Esophagus squamous epithelium (tissue), 5 donors: ENCODE measurements at regions of chr1 and their contacts with region 1.

Region 1: DNA sequence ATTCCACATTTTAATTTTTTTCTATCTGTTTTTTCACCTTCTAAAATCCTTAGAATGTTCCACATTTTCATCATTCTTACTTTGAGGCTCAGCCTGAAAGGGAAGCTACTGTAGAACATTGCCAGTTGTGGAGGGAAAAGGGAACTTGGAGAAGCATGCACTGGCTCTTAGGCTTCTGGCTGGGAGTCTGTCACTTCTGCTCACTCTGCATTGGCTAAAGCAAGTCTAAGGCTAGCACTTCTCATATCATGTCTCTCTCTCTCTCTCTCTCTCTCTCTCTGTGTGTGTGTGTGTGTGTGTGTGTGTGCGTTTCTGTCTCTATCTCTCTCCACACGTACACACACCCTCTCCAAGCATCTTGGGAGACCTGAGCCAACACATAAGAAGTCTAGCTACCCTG is 49.6 kb upstream of the ADAR start:
- DNase-seq: no peak
- H3K4me3 ChIP-seq: no peak overlapping the region
- H3K27ac ChIP-seq: no peak overlapping the region
- H3K4me1 ChIP-seq: no peaks in the 10 kb centered on the region
- H3K27me3 ChIP-seq: peaks cover 0 to 49% (median 0%) of the 10 kb centered on the region in 4 donors
- CTCF ChIP-seq: no peak
- POLR2A ChIP-seq: no peak

Region 2: DNA sequence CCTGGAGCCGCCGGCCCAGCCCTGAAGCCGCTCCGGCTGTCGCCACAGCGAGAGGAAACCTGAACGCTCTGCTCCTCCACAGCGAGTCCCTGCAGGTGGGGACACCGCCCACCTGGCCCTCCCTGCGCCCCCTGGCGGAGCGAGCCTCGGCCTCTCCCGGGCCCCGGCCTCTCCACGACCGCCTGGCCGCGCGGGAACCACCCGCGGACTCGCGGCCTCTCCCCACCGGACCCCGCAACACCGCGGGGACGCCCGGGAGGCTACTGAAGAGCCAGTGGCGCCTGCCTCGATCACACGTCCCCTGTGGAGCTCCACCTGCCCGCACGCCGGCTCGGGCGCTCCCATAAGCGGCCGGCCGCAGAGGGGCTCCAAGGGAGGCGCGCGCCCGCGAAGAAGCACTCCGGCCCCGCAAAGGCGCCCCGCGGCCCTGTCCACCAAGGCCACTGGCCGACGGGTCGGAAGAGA is 102.9 kb after region 1 on chr1:
- intact Hi-C with region 1: loop called (anchors 10 kb)
- DNase-seq: no peak
- H3K4me3 ChIP-seq: peak overlapping the region; percentile 13 to 58 (median 26)
- H3K27ac ChIP-seq: no peak overlapping the region
- H3K4me1 ChIP-seq: peaks cover 6 to 22% (median 10%) of the 10 kb centered on the region in 3 donors
- H3K27me3 ChIP-seq: peaks cover 0 to 50% (median 0%) of the 10 kb centered on the region in 4 donors
- CTCF ChIP-seq: peak; percentile 68 to 80 (median 77)
- POLR2A ChIP-seq: no peak